Motor neuron (in vitro differentiated cells): ENCODE measurements at regions of chr9 and their contacts with region 1.

Region 1: GRCh38 chr9:119289740-119290433 is 79.3 kb downstream of the BRINP1 start:
- ATAC-seq: peak in 4 of 8 experiments; percentile 43 to 90 (median 71)
- H3K4me3 ChIP-seq: no peak overlapping the region
- H3K27ac ChIP-seq: no peak overlapping the region
- H3K4me1 ChIP-seq: peaks cover 2 to 4% of the 10 kb centered on the region in 2 donors

Region 2: GRCh38 chr9:118829334-118829733 is 460.6 kb before region 1 on chr9:
- in situ Hi-C with region 1: loop called in 1 of 9 experiments (anchors 25 kb)
- ATAC-seq: peak in 2 of 8 experiments; percentile 42 to 59
- H3K4me3 ChIP-seq: no peak overlapping the region
- H3K27ac ChIP-seq: no peak overlapping the region
- H3K4me1 ChIP-seq: no peaks in the 10 kb centered on the region